Activated T-helper 1 cell treated with anti-CD3 and anti-CD28 coated beads, Interleukin-12 subunit alpha, Interleukin-12 subunit beta, Interleukin-2, Interleukin-4 antibody, amounts not matched to agents 30 ng/mL and 10 ng/mL and 1 ng/mL, durations not matched to agents 14 hours and 24 hours and 36 hours (primary cell): ENCODE measurements at regions of chr11 and their contacts with region 1.

Region 1: DNA sequence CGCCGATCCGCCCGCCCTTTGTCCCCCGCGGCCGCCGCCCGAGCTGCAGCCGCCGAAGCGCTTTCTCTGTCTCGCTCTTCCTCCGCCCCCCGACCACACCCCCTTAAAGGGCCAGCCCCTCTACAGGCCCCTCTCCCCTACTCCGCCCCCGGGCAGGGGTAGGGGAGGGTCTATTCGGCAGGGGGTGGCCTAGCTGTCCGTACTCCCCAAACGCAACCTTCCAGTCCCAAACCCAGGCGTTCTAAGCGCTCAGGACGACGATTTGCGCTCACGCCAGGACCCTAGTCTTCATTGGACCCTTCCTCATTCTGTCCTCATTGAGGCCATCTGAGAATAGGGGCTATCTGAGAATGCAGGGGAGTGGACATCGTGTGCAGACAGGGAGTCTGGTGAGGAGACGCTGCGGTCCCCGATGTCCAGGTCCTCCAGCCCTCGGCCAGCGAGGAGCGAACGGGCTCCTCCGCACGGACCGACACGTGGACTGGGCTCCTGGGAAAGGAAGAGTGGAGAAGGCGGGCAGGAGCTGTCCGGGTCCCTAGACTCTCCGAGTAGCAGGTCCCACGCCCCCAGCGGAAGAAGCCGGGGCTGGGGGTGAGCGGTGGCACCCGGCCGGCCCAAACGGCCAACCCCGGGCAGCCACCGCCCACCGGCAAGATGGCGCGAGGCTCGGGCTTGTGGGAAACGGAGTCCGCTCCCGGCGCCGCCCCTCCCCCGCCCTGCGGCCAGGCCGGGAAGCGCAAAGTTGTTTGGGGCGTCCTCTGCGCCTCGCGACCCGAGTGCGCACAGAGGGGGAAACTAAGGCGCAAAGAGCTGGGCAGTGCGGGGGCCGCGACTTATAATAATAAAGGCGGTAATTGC is at the start of gene PPP1R14B:
- DNase-seq: peak; percentile 79
- H3K4me3 Mint-ChIP-seq: peak within 1 kb of the TSS; percentile 94
- H3K27ac Mint-ChIP-seq: peak within 1 kb of the TSS; percentile 94
- H3K4me1 Mint-ChIP-seq: peaks cover 29% of the 10 kb centered on the region
- H3K27me3 Mint-ChIP-seq: peaks cover 1% of the 10 kb centered on the region
- total RNA-seq, gene PPP1R14B: 238 and 248 TPM in 2 replicates

Region 2: GRCh38 chr11:64100360-64100759 is 146.7 kb before region 1 on chr11:
- intact Hi-C with region 1: no loop called
- DNase-seq: no peak
- H3K4me3 Mint-ChIP-seq: no peak overlapping the region
- H3K27ac Mint-ChIP-seq: no peak overlapping the region
- H3K4me1 Mint-ChIP-seq: no peaks in the 10 kb centered on the region
- H3K27me3 Mint-ChIP-seq: no peaks in the 10 kb centered on the region

Region 3: DNA sequence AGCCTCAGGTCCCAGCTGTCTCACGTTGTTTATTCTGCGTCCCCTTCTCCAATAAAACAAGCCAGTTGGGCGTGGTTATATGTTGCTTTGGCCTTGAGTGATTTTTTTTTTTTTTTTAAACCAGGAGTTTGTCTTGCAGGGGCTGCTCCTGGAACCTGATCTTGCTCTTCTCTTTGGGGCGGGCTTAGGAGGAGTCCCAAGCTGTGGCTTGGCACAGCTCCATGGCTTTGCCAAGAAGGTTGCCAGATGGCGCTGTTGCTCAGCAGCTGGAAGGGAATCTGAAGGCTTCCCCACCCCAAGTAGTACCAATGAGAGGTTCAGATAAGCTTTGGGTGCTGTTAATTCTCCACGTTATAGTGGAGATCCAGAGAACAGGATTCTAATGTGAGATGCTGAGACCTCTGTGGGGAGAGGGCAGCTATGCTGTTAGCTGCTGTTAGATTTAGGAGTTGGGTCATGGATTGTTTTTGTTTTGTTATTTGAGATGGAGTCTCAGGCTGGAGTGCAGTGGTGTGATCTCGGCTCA is 42.6 kb before region 1 on chr11:
- intact Hi-C with region 1: loop called (anchors 1 kb)
- DNase-seq: peak; percentile 61
- H3K4me3 Mint-ChIP-seq: peak overlapping the region; percentile 78
- H3K27ac Mint-ChIP-seq: peak overlapping the region; percentile 70
- H3K4me1 Mint-ChIP-seq: peaks cover 39% of the 10 kb centered on the region
- H3K27me3 Mint-ChIP-seq: no peaks in the 10 kb centered on the region

Region 4: DNA sequence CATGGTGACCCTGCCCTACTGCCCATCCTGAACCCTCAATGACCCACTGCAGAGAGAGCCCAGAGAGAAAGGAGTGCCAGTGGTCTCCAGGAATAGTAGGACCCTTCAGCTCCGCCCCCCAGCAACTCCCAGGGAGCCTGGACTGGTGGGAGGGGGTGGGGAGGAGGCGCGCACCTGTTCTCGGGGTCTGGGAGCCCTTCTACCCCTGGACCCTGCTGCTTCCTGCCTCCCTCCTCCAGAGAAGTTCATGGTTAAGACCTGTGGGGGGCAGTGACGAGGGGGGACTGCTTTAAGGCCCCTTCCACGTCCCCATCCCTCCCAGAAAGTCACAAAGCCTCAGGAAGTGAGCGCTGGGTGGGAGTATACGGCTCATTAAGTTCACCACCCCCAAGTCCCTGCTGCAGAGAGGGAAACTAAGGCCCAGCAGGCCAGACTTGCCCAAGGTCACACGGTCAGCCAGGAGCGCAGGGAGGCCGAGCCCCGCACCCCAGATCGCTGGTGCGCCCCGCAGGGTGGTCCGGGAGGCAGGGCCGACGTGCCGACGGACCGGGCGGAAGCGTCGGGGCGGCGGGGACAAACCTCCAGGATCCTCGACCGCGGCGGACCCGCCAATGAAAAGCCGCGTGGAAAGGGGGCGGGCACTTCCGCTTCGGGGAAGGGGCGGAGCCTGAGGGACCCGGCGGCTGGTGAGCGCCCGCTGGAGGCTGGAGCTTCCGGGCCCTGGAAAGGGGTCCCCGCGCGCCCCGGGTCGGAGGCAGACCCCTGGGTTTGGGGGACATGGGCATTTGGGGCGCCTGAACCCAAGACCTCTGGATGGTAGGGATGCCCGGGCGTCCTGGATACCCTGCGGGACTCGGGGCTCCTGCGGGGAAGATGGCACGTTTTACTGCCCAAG is 21.2 kb before region 1 on chr11 and contains the starts of genes NUDT22 and TRPT1:
- intact Hi-C with region 1: loop called (anchors 1 kb)
- DNase-seq: peak; percentile 92
- H3K4me3 Mint-ChIP-seq: peak within 1 kb of the TSS; percentile 87
- H3K27ac Mint-ChIP-seq: peak within 1 kb of the TSS; percentile 80
- H3K4me1 Mint-ChIP-seq: peaks cover 27% of the 10 kb centered on the region
- H3K27me3 Mint-ChIP-seq: no peaks in the 10 kb centered on the region
- total RNA-seq, gene NUDT22: 74.9 and 79.4 TPM in 2 replicates
- total RNA-seq, gene TRPT1: 30.3 and 35.5 TPM in 2 replicates

Region 5: GRCh38 chr11:64263021-64263946 is 16.2 kb after region 1 on chr11:
- intact Hi-C with region 1: no loop called
- DNase-seq: no peak
- H3K4me3 Mint-ChIP-seq: no peak overlapping the region
- H3K27ac Mint-ChIP-seq: no peak overlapping the region
- H3K4me1 Mint-ChIP-seq: peaks cover 19% of the 10 kb centered on the region
- H3K27me3 Mint-ChIP-seq: no peaks in the 10 kb centered on the region

Region 6: GRCh38 chr11:64358907-64359711 is 112.0 kb after region 1 on chr11 and contains the start of gene RPS6KA4:
- intact Hi-C with region 1: loop called (anchors 5 kb)
- DNase-seq: peak; percentile 52
- H3K4me3 Mint-ChIP-seq: peak within 1 kb of the TSS; percentile 94
- H3K27ac Mint-ChIP-seq: peak within 1 kb of the TSS; percentile 85
- H3K4me1 Mint-ChIP-seq: peaks cover 30% of the 10 kb centered on the region
- H3K27me3 Mint-ChIP-seq: no peaks in the 10 kb centered on the region
- total RNA-seq, gene RPS6KA4: 38.3 and 46.0 TPM in 2 replicates